Dorsolateral prefrontal cortex (tissue), 120 donors: ENCODE measurements at regions of chr4 and their contacts with region 1.

Region 1: DNA sequence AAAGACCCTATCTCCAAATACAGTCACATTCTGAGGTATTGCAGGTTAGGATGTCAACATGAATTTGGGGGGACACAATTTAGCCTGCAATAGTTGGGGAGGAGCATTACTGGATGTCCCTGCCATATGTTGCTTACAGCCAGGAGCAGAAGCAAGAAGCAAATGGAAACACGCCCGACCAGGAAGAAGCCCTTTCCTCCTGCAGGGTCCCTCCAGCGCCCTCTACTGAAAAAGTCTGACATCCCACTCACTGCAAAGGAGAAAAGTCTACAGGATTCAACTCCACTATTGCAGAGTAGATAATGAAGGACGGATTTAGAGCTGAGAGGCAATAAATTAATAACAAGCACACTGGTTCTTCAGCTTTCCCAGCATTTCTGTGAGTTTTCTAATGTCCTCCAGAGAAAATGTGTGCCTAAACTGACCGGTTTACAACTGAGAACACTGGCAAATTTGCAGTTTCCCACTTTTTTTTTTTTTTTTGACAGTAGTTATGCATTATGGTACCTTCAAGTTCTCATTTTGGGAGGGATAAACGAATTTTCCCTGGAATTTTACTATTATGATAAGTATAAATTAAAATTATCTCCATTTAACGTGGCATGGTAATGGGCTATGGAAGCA is 31.7 kb downstream of the COQ2 start:
- DNase-seq: peak in 3 of 10 donors; percentile 19 to 28 (median 28)
- H3K4me3 ChIP-seq: no peak overlapping the region
- H3K27ac ChIP-seq: no peak overlapping the region
- H3K27me3 ChIP-seq: no peaks in the 10 kb centered on the region
- CTCF ChIP-seq: peak in 49 of 56 donors; percentile 25 to 70 (median 49)

Region 2: GRCh38 chr4:82667761-82668505 is 585.0 kb before region 1 on chr4:
- intact Hi-C with region 1: no loop called
- DNase-seq: no peak
- H3K4me3 ChIP-seq: no peak overlapping the region
- H3K27ac ChIP-seq: peak overlapping the region in 43 of 59 donors; percentile 1 to 63 (median 33)
- H3K27me3 ChIP-seq: no peaks in the 10 kb centered on the region
- CTCF ChIP-seq: no peak

Region 3: DNA sequence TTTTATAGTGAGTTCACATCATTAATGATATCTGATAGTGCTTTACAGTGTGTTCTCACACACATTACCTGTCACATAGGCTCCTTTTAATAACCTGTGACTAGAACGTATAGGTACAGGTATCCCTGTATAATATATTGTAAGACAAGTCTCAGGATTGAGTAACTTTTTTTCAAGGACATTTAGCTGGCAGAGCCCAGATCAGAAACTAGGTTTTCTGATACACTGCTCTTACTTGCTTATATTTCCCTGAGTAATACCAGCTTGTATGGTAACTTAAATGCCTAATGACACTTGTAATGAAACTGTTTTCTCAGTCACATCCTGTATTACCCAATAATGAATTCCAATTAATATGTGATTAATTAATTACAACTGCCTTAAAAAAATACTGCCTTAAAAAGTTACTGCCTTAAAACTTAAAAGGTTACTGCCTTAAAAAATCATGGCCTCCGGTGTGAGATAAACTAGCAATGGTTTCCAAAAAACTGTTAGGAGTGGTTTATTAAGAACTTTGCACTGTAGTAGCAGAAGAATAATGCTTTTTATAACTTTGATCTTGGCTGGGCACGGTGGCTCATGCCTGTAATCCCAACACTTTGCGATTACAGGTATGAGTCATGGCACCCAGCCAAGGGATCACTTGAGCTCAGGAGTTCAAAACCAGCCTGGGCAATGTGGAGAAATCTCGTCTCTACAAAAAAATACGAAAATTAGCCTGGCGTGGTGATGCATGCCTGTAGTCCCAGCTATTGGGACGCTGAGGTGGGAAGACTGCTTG is 206.0 kb before region 1 on chr4:
- intact Hi-C with region 1: no loop called
- DNase-seq: no peak
- H3K4me3 ChIP-seq: no peak overlapping the region
- H3K27ac ChIP-seq: no peak overlapping the region
- H3K27me3 ChIP-seq: no peaks in the 10 kb centered on the region
- CTCF ChIP-seq: no peak

Region 4: GRCh38 chr4:83074086-83074704 is 178.7 kb before region 1 on chr4:
- intact Hi-C with region 1: loop called in 1 of 2 experiments (anchors 10 kb)
- DNase-seq: no peak
- H3K4me3 ChIP-seq: no peak overlapping the region
- H3K27ac ChIP-seq: peak overlapping the region in 1 of 59 donors; percentile 45
- H3K27me3 ChIP-seq: no peaks in the 10 kb centered on the region
- CTCF ChIP-seq: peak; percentile 58 to 84 (median 75)

Region 5: GRCh38 chr4:83197555-83198235 is 55.2 kb before region 1 on chr4:
- intact Hi-C with region 1: no loop called
- DNase-seq: peak in 1 of 10 donors; percentile 39
- H3K4me3 ChIP-seq: no peak overlapping the region
- H3K27ac ChIP-seq: no peak overlapping the region
- H3K27me3 ChIP-seq: no peaks in the 10 kb centered on the region
- CTCF ChIP-seq: no peak